ENCODE measurements at regions of chr10 and their contacts with region 1.

Region 1: DNA sequence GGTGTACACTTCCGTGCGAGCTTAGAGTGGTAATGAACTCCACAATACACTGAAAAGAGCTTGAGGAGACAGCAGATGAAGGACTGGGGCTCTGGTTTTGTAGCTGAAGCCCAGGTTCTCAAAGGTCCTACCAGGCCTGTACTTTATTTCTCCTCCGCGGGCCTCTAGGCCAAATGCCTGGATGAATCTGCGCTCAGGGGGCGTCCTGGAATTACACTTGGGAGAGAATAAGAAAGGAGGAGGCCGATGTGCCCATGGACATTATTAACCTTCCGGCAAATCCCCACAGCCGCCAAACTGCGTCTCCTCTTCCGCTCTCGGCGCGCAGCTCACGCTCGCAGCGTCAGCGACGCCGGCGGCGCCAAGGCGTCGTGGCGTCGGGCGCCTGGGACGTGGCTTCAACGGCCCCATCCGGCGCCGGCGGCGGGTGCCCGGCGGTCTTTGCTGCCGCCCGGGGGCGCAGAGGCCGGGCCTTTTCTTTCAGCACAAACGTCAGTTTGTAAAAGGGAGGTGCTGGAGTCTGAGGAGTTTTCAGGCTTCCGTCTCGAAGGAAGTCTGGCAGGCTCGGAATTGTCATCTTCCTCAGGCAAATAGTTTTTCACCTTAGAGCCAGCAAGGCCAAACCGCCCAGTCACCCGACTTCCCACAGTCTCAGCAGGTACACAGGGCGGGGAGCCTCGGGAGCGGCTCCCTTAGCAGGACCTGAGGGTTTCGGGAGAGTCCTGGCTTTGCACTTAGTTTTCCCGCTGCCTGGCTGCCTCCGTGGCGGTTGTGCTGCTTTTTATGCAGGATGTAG is at the start of gene CCDC7:
- DNase-seq: peak; percentile 77 to 89 (median 87)
- H3K4me3 ChIP-seq: peak within 1 kb of the TSS; percentile 97
- H3K4me3 Mint-ChIP-seq: peak within 1 kb of the TSS; percentile 94 to 98 (median 97)
- H3K27ac ChIP-seq: peak within 1 kb of the TSS; percentile 97
- H3K27ac Mint-ChIP-seq: peak within 1 kb of the TSS; percentile 96 to 100 (median 100)
- H3K4me1 ChIP-seq: peaks cover 5% of the 10 kb centered on the region
- H3K4me1 Mint-ChIP-seq: peaks cover 11 to 34% (median 24%) of the 10 kb centered on the region in 3 donors
- H3K27me3 ChIP-seq: no peaks in the 10 kb centered on the region
- H3K27me3 Mint-ChIP-seq: no peaks in the 10 kb centered on the region
- total RNA-seq, gene CCDC7: 11.6 to 12.1 TPM

Region 2: GRCh38 chr10:32378363-32379317 is 67.3 kb before region 1 on chr10:
- CTCF ChIA-PET with region 1: interaction called, 8 read pairs
- POLR2A ChIA-PET with region 1: interaction called, 39 read pairs
- DNase-seq: peak; percentile 88 to 95 (median 88)
- H3K4me3 ChIP-seq: peak overlapping the region; percentile 92
- H3K4me3 Mint-ChIP-seq: no peak overlapping the region
- H3K27ac ChIP-seq: peak overlapping the region; percentile 89
- H3K27ac Mint-ChIP-seq: no peak overlapping the region
- H3K4me1 ChIP-seq: peaks cover 20% of the 10 kb centered on the region
- H3K4me1 Mint-ChIP-seq: peaks cover 21 to 26% (median 23%) of the 10 kb centered on the region in 3 donors
- H3K27me3 ChIP-seq: no peaks in the 10 kb centered on the region
- H3K27me3 Mint-ChIP-seq: no peaks in the 10 kb centered on the region

Region 3: GRCh38 chr10:32459051-32459698 is 13.2 kb after region 1 on chr10:
- CTCF ChIA-PET with region 1: interaction called, 15 read pairs
- POLR2A ChIA-PET with region 1: interaction called, 15 read pairs
- DNase-seq: peak in 4 of 5 donors; percentile 29 to 86 (median 74)
- H3K4me3 ChIP-seq: peak overlapping the region; percentile 26
- H3K4me3 Mint-ChIP-seq: peak overlapping the region; percentile 3 to 73 (median 52)
- H3K27ac ChIP-seq: no peak overlapping the region
- H3K27ac Mint-ChIP-seq: peak overlapping the region; percentile 51 to 90 (median 77)
- H3K4me1 ChIP-seq: peaks cover 41% of the 10 kb centered on the region
- H3K4me1 Mint-ChIP-seq: peaks cover 43 to 60% (median 54%) of the 10 kb centered on the region in 3 donors
- H3K27me3 ChIP-seq: no peaks in the 10 kb centered on the region
- H3K27me3 Mint-ChIP-seq: no peaks in the 10 kb centered on the region

Measured in CD8-positive, alpha-beta memory T cell (primary cell).